PC-9 (cell line): ENCODE measurements at regions of chr9 and their contacts with region 1.

Region 1: DNA sequence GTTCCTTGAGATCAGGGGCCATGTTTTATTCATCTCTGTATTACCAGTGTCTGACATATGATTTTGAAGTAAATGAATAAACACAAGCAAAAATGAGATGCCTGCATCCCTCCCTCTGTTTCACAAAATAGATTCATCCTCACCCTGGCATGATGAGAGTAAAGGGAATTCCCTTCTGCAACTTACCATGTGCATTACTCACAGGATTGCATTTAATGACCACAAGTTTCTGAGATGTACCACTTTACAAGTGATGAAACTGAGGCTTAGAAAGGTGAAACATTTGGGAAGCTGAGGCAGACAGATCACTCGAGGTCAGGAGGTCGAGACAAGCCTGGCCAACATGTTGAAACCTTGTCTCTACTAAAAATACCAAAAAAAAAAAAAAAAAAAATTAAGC is 74.2 kb upstream of the TNFSF8 start:
- DNase-seq: no peak
- H3K4me3 ChIP-seq: no peak overlapping the region
- H3K27ac ChIP-seq: no peak overlapping the region
- H3K4me1 ChIP-seq: no peaks in the 10 kb centered on the region
- H3K27me3 ChIP-seq: peaks cover 15% of the 10 kb centered on the region; the same call in 1 of the 2 replicates
- CTCF ChIP-seq: no peak

Region 2: DNA sequence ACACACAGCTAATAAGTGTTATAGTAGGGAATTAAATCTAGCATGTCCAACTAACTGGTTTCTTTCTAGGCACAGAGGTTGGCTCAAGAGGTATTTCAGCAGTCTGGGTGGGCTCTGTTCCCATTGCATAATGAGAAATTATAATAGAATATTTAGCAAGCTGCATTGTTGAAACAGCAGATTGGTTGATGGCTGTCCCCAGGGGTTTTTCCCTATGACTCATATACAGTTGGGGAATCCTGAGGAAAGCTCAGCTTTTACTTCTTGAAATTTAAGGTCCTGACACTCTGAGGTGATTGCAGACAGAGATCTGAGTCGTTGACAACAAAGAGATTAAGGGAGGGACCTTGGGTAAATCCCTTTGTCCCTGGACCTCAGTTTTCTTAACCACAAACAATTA is 35.9 kb before region 1 on chr9:
- CTCF ChIA-PET with region 1: interaction called, 4 read pairs
- POLR2A ChIA-PET with region 1: no interaction called
- intact Hi-C with region 1: loop called (anchors 1 kb)
- DNase-seq: no peak
- H3K4me3 ChIP-seq: no peak overlapping the region
- H3K27ac ChIP-seq: no peak overlapping the region
- H3K4me1 ChIP-seq: no peaks in the 10 kb centered on the region
- H3K27me3 ChIP-seq: peaks cover 4% of the 10 kb centered on the region; the same call in 1 of the 2 replicates
- CTCF ChIP-seq: no peak

Region 3: GRCh38 chr9:115775659-115776058 is 771.1 kb after region 1 on chr9:
- CTCF ChIA-PET with region 1: no interaction called
- POLR2A ChIA-PET with region 1: no interaction called
- intact Hi-C with region 1: no loop called
- DNase-seq: no peak
- H3K4me3 ChIP-seq: no peak overlapping the region
- H3K27ac ChIP-seq: no peak overlapping the region
- H3K4me1 ChIP-seq: no peaks in the 10 kb centered on the region
- H3K27me3 ChIP-seq: no peaks in the 10 kb centered on the region
- CTCF ChIP-seq: no peak